ENCODE measurements at regions of chr9 and their contacts with region 1.

Region 1: DNA sequence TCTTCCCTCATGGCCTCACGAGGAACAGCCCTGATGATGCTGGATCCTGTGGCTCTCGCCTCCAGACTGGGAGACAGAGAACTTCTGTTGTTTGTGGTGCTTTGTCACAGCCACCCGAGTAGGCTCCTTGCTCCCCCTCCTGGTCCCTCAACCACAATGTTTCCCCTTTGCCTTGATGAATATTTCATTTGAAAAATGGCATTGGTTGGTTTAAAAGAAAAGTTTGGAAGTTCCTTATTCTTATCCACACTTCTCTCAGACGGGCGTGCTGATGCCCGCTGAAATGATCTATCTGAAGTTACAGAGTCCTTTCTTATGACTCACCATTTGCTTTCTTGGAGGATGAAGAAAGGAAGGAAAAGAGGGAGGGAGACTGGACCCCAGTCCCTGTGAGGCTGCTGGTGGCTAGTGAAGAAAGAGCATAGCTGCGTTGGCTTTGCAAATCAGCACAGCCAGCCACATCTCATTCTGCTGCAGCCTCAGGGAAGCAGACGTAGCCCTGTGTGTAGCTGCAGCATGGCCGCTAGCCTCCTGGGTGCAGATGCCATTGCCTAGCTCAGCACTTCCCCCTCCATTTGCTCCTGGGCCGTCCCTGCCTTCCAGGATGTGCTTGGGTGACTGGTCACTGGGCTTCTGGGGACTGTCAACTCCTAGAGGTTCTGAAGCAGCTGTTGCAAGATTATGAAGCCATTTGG is 185.9 kb downstream of the ERCC6L2 start:
- DNase-seq: peak; percentile 19 to 65 (median 56)
- ATAC-seq: peak; percentile 67
- H3K4me3 ChIP-seq: no peak overlapping the region
- H3K4me3 Mint-ChIP-seq: no peak overlapping the region
- H3K27ac ChIP-seq: no peak overlapping the region
- H3K27ac Mint-ChIP-seq: no peak overlapping the region
- H3K4me1 ChIP-seq: peaks cover 5% of the 10 kb centered on the region
- H3K4me1 Mint-ChIP-seq: peaks cover 13% of the 10 kb centered on the region
- H3K27me3 ChIP-seq: no peaks in the 10 kb centered on the region
- H3K27me3 Mint-ChIP-seq: peaks cover 2% of the 10 kb centered on the region
- CTCF ChIP-seq: peak; percentile 71

Region 2: GRCh38 chr9:95268681-95269080 is 792.8 kb before region 1 on chr9:
- CTCF ChIA-PET with region 1: interaction called, 4 read pairs
- POLR2A ChIA-PET with region 1: no interaction called
- intact Hi-C with region 1: loop called in 1 of 2 experiments (anchors 10 kb)
- DNase-seq: peak in 1 of 9 experiments; percentile 10
- ATAC-seq: no peak
- H3K4me3 ChIP-seq: no peak overlapping the region
- H3K4me3 Mint-ChIP-seq: no peak overlapping the region
- H3K27ac ChIP-seq: no peak overlapping the region
- H3K27ac Mint-ChIP-seq: no peak overlapping the region
- H3K4me1 ChIP-seq: no peaks in the 10 kb centered on the region
- H3K4me1 Mint-ChIP-seq: peaks cover 16% of the 10 kb centered on the region
- H3K27me3 ChIP-seq: no peaks in the 10 kb centered on the region
- H3K27me3 Mint-ChIP-seq: no peaks in the 10 kb centered on the region
- CTCF ChIP-seq: no peak

Region 3: DNA sequence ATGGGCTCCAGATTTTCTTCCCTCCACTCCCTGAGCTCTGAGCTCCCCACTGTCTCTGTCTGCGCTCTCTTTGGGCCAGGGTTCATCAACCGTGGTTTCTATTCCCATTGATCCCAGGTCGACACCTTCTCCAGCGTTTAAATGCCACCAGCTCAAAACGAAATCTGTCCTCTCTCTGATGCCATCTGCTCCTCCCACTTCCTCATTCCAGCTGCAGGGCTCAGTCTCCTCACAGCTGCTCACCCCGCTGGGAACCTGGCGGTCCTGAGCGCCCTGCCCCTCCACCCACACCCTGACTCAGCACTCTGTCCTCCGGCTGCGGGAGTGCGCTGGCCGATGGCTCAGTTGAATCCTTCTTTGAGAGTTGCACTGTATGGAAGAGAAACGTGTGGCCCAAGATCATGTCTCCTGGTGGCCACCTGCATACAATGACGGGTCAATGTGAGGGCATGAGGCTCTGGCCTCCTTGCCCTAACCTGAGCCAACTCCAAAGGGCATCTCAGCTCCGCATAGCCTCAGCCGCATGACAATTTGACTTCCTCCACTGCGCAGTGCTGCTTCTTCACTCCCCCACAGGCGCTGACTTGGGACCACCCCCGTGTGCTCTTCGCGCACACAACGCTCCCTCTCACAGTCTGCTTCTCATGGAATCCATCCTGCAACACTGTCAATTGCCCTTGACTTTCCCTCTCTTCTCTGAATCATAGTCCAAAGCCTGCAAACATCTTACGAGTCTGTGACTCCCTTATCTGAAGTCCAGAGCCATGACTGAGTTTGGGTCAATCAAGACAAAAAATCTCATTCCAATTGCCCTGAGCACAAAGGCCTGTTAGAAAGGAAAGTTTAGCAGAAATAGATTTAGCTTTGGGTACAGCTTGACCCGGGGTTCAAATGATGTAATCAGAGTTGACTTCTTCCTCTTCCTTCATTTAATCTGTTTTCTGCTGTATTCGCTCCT is 627.0 kb before region 1 on chr9:
- CTCF ChIA-PET with region 1: no interaction called
- POLR2A ChIA-PET with region 1: no interaction called
- intact Hi-C with region 1: loop called in 1 of 2 experiments (anchors 1 kb)
- DNase-seq: no peak
- ATAC-seq: no peak
- H3K4me3 ChIP-seq: no peak overlapping the region
- H3K4me3 Mint-ChIP-seq: no peak overlapping the region
- H3K27ac ChIP-seq: no peak overlapping the region
- H3K27ac Mint-ChIP-seq: peak overlapping the region; percentile 39
- H3K4me1 ChIP-seq: no peaks in the 10 kb centered on the region
- H3K4me1 Mint-ChIP-seq: peaks cover 8% of the 10 kb centered on the region
- H3K27me3 ChIP-seq: no peaks in the 10 kb centered on the region
- H3K27me3 Mint-ChIP-seq: peaks cover 7% of the 10 kb centered on the region
- CTCF ChIP-seq: no peak

Region 4: GRCh38 chr9:95810135-95810534 is 251.3 kb before region 1 on chr9:
- CTCF ChIA-PET with region 1: no interaction called
- POLR2A ChIA-PET with region 1: no interaction called
- intact Hi-C with region 1: loop called in 1 of 2 experiments (anchors 1 kb)
- DNase-seq: peak in 1 of 9 experiments; percentile 7
- ATAC-seq: no peak
- H3K4me3 ChIP-seq: no peak overlapping the region
- H3K4me3 Mint-ChIP-seq: no peak overlapping the region
- H3K27ac ChIP-seq: no peak overlapping the region
- H3K27ac Mint-ChIP-seq: no peak overlapping the region
- H3K4me1 ChIP-seq: peaks cover 6% of the 10 kb centered on the region
- H3K4me1 Mint-ChIP-seq: peaks cover 17% of the 10 kb centered on the region
- H3K27me3 ChIP-seq: no peaks in the 10 kb centered on the region
- H3K27me3 Mint-ChIP-seq: peaks cover 6% of the 10 kb centered on the region
- CTCF ChIP-seq: no peak

Region 5: GRCh38 chr9:96217754-96218693 is 156.6 kb after region 1 on chr9:
- CTCF ChIA-PET with region 1: interaction called, 4 read pairs
- POLR2A ChIA-PET with region 1: no interaction called
- intact Hi-C with region 1: loop called in 1 of 2 experiments (anchors 1 kb)
- DNase-seq: peak; percentile 48 to 88 (median 77)
- ATAC-seq: peak; percentile 81
- H3K4me3 ChIP-seq: peak overlapping the region; percentile 9 to 27
- H3K4me3 Mint-ChIP-seq: peak overlapping the region; percentile 80
- H3K27ac ChIP-seq: no peak overlapping the region
- H3K27ac Mint-ChIP-seq: no peak overlapping the region
- H3K4me1 ChIP-seq: peaks cover 8% of the 10 kb centered on the region
- H3K4me1 Mint-ChIP-seq: peaks cover 12% of the 10 kb centered on the region
- H3K27me3 ChIP-seq: peaks cover 0 to 8% of the 10 kb centered on the region in 2 experiments
- H3K27me3 Mint-ChIP-seq: peaks cover 37% of the 10 kb centered on the region
- CTCF ChIP-seq: peak; percentile 98